Mammary epithelial cell (primary cell): ENCODE measurements at regions of chr7 and their contacts with region 1.

Region 1: DNA sequence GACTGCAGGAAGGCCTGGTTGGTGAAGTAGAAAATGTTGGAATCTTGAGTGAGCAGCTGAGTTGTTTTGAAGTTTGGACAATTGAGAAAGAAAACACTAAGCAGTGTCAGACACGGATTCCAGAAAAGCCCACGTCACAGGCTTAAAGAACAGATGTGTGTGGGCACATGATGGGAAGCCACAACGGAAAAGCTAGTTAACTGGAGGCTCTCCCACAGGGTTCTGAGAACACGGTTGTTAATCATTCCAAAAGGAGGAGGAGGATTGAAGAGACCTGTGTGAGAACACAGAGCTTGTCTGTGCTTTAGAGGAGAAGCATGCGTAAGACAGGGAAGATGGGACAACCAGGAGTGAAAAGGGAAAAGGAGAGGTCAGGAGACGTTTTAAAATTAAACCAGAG is 42.6 kb downstream of the SHH start:
- DNase-seq: no peak
- H3K4me3 ChIP-seq: no peak overlapping the region
- H3K27ac ChIP-seq: no peak overlapping the region
- H3K4me1 ChIP-seq: no peaks in the 10 kb centered on the region
- H3K27me3 ChIP-seq: no peaks in the 10 kb centered on the region
- CTCF ChIP-seq: no peak

Region 2: GRCh38 chr7:155412537-155413253 is 357.0 kb before region 1 on chr7:
- CTCF ChIA-PET with region 1: no interaction called
- dilution Hi-C with region 1: no loop called
- in situ Hi-C with region 1: no loop called
- intact Hi-C with region 1: loop called (anchors 2 kb)
- DNase-seq: peak; percentile 19
- H3K4me3 ChIP-seq: no peak overlapping the region
- H3K27ac ChIP-seq: no peak overlapping the region
- H3K4me1 ChIP-seq: no peaks in the 10 kb centered on the region
- H3K27me3 ChIP-seq: peaks cover 10% of the 10 kb centered on the region
- CTCF ChIP-seq: peak; percentile 46 to 62

Region 3: DNA sequence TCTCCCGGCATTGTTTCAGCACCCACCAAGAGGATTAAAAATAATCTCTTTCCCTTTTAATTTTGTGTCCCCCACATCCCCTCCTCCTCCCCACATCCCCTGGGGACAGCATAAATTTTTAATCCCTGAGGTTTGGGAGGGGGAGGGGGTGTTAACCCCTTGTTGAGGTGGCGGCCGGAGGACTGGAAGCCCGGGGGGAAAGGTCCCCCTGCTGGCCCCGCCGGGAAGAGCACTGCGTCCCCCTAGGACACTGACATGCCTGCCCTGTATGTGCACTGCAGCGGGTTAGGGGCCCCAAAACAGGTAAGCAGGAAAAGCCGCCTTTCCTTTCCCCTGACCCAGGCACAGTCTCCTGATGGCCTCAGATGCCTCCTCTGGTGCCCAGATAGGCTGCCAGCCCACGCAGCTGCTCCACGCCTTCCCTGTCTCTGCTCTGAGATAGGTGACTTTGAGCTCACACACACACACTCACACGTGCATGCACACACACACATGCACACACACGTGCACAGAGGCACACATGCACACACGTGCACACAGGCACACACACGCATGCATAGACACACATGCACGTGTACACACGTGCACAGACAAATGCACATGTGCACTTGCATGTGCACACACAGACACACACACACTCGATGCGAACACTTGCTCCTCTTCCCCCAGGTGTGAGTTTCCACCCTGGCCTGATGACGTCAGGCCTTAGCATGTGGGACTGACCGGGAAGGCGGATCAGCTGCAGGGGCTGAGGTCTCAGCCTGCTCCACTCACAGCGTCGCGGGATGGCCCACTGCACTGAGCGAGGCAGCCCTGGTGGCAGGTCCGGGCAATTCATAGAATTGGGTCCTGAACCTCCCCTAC is 235.6 kb before region 1 on chr7:
- CTCF ChIA-PET with region 1: no interaction called
- dilution Hi-C with region 1: no loop called
- in situ Hi-C with region 1: no loop called
- intact Hi-C with region 1: no loop called
- DNase-seq: no peak
- H3K4me3 ChIP-seq: no peak overlapping the region
- H3K27ac ChIP-seq: no peak overlapping the region
- H3K4me1 ChIP-seq: peaks cover 3% of the 10 kb centered on the region
- H3K27me3 ChIP-seq: peaks cover 41% of the 10 kb centered on the region
- CTCF ChIP-seq: peak; percentile 21 to 54

Region 4: DNA sequence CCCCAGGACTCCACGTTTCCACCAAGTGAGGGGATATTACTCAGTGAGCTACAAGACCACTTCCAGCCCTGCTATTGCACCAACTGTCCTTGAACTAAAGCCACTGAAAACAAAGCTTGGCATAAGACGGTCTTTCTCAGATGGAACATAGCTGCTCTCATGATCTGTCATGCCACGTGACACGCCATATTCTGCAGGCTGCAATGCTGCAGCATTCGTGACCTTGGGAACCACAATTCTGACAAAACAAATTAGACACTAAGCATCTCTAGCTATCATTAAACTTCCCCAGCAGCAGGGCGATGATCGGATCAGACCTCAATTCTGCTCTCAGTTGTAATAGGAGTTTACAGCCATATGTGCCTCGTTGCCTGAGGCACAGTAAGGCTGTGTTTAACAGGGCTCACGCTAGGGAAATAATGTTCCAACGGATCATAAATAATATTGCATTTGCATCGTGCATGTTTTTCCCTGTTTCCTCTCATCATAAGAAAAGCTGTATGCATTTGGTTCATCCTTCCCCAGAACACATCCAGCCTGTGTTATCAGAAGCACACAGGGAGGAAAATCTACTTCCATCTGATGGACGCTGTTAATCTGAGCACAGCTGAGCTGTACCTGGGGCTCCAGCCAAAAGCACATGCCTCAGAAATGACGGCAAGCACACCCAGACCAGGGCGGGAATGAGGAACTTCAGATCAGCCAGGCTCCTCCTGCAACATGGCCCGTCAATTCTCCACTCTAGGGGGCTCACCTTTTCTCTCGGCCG is 184.8 kb before region 1 on chr7:
- CTCF ChIA-PET with region 1: no interaction called
- dilution Hi-C with region 1: loop called (anchors 10 kb)
- in situ Hi-C with region 1: no loop called
- intact Hi-C with region 1: no loop called
- DNase-seq: no peak
- H3K4me3 ChIP-seq: no peak overlapping the region
- H3K27ac ChIP-seq: no peak overlapping the region
- H3K4me1 ChIP-seq: peaks cover 21% of the 10 kb centered on the region
- H3K27me3 ChIP-seq: no peaks in the 10 kb centered on the region
- CTCF ChIP-seq: no peak